A549 (cell line): ENCODE measurements at regions of chr11 and their contacts with region 1.

Region 1: DNA sequence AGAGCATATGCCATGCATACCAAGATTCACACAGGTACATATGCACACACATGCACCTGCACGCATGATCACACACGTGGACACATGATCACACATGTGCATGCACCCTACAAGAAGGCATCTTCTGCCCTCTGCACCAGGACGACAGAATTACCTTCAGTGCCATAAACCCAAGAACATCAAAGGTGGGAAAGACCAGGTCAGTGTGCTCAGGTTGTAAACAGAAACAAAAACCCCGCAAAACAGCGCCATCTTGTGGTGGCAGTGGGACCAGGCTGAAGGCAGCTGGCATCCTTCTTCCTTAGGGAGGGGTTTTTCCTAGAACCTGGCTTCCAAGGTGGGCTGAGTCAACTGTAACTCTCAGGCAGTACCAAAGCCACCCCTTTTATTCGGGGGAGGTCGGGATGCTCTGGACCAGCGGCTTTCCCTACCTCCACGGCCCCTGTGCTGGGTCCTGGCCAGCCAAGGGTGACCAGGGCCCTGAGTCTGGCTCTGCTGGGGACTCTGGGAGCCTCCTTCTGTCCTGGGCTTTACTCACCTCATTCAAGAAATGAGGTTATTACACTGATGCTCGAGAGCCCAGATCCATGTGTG is 69.4 kb upstream of the FGF3 start:
- DNase-seq: peak; percentile 68 to 86
- ATAC-seq: peak; percentile 79 to 87
- H3K4me3 ChIP-seq: no peak overlapping the region
- H3K27ac ChIP-seq: no peak overlapping the region
- H3K4me1 ChIP-seq: no peaks in the 10 kb centered on the region
- CTCF ChIP-seq: peak; percentile 93
- EP300 ChIP-seq: no peak
- POLR2A ChIP-seq: no peak
- RAD21 ChIP-seq: peak; percentile 73 to 82

Region 2: GRCh38 chr11:69683764-69684333 is 204.7 kb before region 1 on chr11:
- CTCF ChIA-PET with region 1: interaction called, 15 read pairs
- POLR2A ChIA-PET with region 1: no interaction called
- DNase-seq: peak in 1 of 2 experiments; percentile 64
- ATAC-seq: peak in 1 of 2 experiments; percentile 75; a peak in 3 of 6 replicates
- H3K4me3 ChIP-seq: no peak overlapping the region
- H3K27ac ChIP-seq: no peak overlapping the region
- H3K4me1 ChIP-seq: peaks cover 12% of the 10 kb centered on the region; the same call in 2 of the 3 replicates
- CTCF ChIP-seq: peak; percentile 66
- EP300 ChIP-seq: no peak
- POLR2A ChIP-seq: no peak
- RAD21 ChIP-seq: peak; percentile 77 to 89

Region 3: GRCh38 chr11:69726019-69726418 is 162.6 kb before region 1 on chr11:
- CTCF ChIA-PET with region 1: interaction called, 11 read pairs
- POLR2A ChIA-PET with region 1: no interaction called
- DNase-seq: no peak
- ATAC-seq: no peak
- H3K4me3 ChIP-seq: no peak overlapping the region
- H3K27ac ChIP-seq: no peak overlapping the region
- H3K4me1 ChIP-seq: no peaks in the 10 kb centered on the region
- CTCF ChIP-seq: no peak
- EP300 ChIP-seq: no peak
- POLR2A ChIP-seq: no peak
- RAD21 ChIP-seq: no peak

Region 4: GRCh38 chr11:69867738-69868493 is 20.7 kb before region 1 on chr11:
- CTCF ChIA-PET with region 1: interaction called, 16 read pairs
- POLR2A ChIA-PET with region 1: no interaction called
- DNase-seq: no peak
- ATAC-seq: peak in 1 of 2 experiments; percentile 42; a peak in 3 of 6 replicates
- H3K4me3 ChIP-seq: no peak overlapping the region
- H3K27ac ChIP-seq: no peak overlapping the region
- H3K4me1 ChIP-seq: no peaks in the 10 kb centered on the region
- CTCF ChIP-seq: no peak
- EP300 ChIP-seq: no peak
- POLR2A ChIP-seq: no peak
- RAD21 ChIP-seq: no peak

Region 5: DNA sequence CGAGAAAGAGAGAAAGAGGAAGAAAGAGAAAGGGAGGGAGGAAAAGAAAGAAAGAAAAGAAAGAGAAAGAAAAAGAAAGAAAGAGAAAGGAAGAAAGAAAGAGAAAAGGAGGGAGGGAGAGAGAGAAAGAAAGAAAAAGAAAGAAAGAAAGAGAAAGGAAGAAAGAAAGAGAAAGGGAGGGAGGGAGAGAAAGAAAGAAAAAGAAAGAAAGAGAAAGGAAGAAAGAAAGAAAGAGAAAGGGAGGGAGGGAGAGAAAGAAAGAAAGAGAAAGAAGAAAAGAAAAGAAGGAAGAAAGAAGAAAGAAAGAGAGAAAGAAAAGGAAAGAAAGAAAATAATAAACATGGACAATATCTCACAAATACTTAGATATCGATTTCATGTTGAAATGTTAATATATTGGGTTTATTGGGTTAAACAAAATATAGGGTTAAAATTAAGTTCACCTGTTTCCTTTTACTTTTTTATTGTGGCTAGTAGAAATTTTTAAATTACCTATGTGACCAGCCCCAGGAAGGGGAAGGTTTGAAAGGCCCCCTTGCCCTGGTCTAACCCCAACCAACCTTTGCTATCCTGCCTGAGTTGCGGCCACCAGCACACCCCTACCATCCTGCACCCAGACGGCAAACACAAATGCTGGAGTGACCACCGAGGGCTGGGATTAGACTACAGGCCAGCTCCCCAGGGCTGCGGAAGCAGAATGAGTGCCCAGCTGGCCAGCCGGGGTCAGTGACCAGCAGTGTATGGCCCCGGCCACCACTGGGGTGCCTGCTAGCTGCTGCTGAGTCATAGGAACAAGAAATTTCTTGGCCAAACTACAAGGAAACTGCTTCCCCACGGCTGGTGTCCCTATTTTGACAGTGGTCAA is 11.6 kb after region 1 on chr11:
- CTCF ChIA-PET with region 1: interaction called, 26 read pairs
- POLR2A ChIA-PET with region 1: no interaction called
- DNase-seq: peak in 1 of 2 experiments; percentile 56
- ATAC-seq: peak; percentile 65 to 81; a peak in 5 of 6 replicates
- H3K4me3 ChIP-seq: no peak overlapping the region
- H3K27ac ChIP-seq: peak overlapping the region; percentile 33 to 75; a peak in 5 of 6 replicates
- H3K4me1 ChIP-seq: peaks cover 16% of the 10 kb centered on the region
- CTCF ChIP-seq: no peak
- EP300 ChIP-seq: no peak
- POLR2A ChIP-seq: no peak
- RAD21 ChIP-seq: no peak